ENCODE measurements at regions of chr2 and their contacts with region 1.

Region 1: GRCh38 chr2:67954093-67954748 is 108.6 kb downstream of the C1D start:
- DNase-seq: peak; percentile 64
- H3K4me3 Mint-ChIP-seq: no peak overlapping the region
- H3K27ac Mint-ChIP-seq: no peak overlapping the region
- H3K4me1 Mint-ChIP-seq: peaks cover 17% of the 10 kb centered on the region
- H3K27me3 Mint-ChIP-seq: no peaks in the 10 kb centered on the region
- CTCF ChIP-seq: no peak

Region 2: DNA sequence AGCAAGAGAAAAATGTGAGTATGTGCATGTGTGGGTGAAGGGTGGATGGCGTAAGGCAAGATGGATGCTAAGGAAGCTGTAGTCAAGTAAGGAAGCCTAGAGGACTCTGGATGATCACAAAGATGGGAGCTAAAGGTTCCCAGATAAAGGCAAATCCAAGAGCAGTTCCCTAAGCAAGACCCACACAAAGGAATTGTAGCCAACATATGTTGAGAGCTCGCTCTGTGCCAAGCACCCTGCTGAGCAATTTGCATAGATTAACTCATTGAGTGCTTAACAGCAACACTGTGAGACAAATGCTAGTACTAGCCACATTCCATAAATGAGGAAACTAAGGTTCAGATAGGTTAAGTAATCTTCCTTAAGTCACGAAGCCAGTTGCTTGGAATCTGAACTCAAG is 24.1 kb before region 1 on chr2:
- CTCF ChIA-PET with region 1: no interaction called
- POLR2A ChIA-PET with region 1: interaction called, 11 read pairs
- intact Hi-C with region 1: no loop called
- DNase-seq: no peak
- H3K4me3 Mint-ChIP-seq: no peak overlapping the region
- H3K27ac Mint-ChIP-seq: no peak overlapping the region
- H3K4me1 Mint-ChIP-seq: no peaks in the 10 kb centered on the region
- H3K27me3 Mint-ChIP-seq: no peaks in the 10 kb centered on the region
- CTCF ChIP-seq: no peak

Region 3: GRCh38 chr2:67938053-67938452 is 16.2 kb before region 1 on chr2:
- CTCF ChIA-PET with region 1: interaction called, 4 read pairs
- POLR2A ChIA-PET with region 1: interaction called, 37 read pairs
- intact Hi-C with region 1: no loop called
- DNase-seq: peak; percentile 11
- H3K4me3 Mint-ChIP-seq: no peak overlapping the region
- H3K27ac Mint-ChIP-seq: peak overlapping the region; percentile 96
- H3K4me1 Mint-ChIP-seq: peaks cover 21% of the 10 kb centered on the region
- H3K27me3 Mint-ChIP-seq: no peaks in the 10 kb centered on the region
- CTCF ChIP-seq: no peak

Measured in MCF 10A (cell line).